AG04449 (cell line): ENCODE measurements at regions of chr5 and their contacts with region 1.

Region 1: GRCh38 chr5:59506285-59506877 is 387.1 kb downstream of the PDE4D start:
- DNase-seq: no peak
- H3K4me3 ChIP-seq: no peak overlapping the region
- CTCF ChIP-seq: no peak

Region 2: DNA sequence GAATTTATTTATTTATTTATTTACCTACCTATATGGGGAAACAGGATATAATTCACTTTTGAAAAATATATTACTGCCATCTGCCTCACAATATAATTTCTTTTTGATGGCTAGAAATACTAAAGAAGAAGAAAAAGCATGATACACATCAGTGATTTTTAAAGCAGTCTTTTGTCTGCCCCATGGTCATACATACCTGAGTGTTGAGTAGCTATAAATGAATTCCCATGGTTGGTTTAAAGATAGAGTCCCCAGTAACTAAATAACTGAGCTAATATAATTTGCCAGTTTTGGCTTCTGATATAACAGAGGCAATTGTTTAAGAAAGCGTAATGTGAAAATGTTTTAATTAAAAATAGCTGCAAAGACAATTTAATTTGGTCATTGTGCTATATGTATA is 60.6 kb before region 1 on chr5:
- CTCF ChIA-PET with region 1: no interaction called
- POLR2A ChIA-PET with region 1: no interaction called
- DNase-seq: no peak
- H3K4me3 ChIP-seq: no peak overlapping the region
- CTCF ChIP-seq: no peak

Region 3: DNA sequence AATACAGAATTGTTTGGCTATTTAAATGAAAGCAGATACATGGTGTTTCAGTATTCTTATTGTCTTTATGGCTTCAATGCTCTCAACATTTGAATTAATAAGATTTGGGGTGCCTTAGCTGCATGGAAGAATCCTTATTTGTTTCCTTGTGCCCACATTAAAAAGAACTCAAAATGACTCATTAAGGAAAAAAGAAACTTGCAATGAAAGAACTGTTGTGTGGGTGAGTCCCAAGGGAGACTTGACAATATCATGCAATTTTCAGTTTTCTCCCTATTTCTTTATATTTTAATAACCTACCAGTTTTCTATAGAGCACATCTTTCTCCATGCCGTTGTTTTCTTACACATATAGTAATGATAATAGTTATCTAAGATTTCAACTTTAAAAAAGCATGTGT is 16.8 kb before region 1 on chr5:
- CTCF ChIA-PET with region 1: interaction called, 17 read pairs
- POLR2A ChIA-PET with region 1: no interaction called
- DNase-seq: no peak
- H3K4me3 ChIP-seq: no peak overlapping the region
- CTCF ChIP-seq: no peak

Region 4: GRCh38 chr5:59620535-59621212 is 114.3 kb after region 1 on chr5:
- CTCF ChIA-PET with region 1: no interaction called
- POLR2A ChIA-PET with region 1: no interaction called
- DNase-seq: peak; percentile 12
- H3K4me3 ChIP-seq: no peak overlapping the region
- CTCF ChIP-seq: no peak

Region 5: DNA sequence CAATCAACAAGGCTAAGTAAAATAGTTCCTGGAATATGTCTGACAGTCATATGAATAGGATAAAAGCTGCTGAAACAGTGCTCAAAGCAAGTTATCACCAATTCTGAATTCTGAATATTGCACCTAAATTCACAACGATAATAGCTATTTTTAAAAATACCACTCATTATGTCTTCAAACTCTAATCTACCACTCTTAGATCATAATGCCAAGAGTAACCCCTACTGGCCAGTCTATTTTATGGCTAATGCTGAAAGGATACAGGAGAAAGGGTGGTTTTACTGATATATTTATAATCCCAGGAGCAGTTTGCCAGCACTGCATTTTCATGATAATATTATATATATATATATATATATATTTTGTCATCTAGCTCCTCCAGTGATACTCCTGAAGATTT is 154.4 kb after region 1 on chr5:
- CTCF ChIA-PET with region 1: interaction called, 83 read pairs
- POLR2A ChIA-PET with region 1: no interaction called
- DNase-seq: no peak
- H3K4me3 ChIP-seq: no peak overlapping the region
- CTCF ChIP-seq: peak; percentile 34

Region 6: GRCh38 chr5:59724482-59725391 is 218.4 kb after region 1 on chr5:
- CTCF ChIA-PET with region 1: interaction called, 14 read pairs
- POLR2A ChIA-PET with region 1: no interaction called
- DNase-seq: no peak
- H3K4me3 ChIP-seq: no peak overlapping the region
- CTCF ChIP-seq: peak; percentile 47

Region 7: DNA sequence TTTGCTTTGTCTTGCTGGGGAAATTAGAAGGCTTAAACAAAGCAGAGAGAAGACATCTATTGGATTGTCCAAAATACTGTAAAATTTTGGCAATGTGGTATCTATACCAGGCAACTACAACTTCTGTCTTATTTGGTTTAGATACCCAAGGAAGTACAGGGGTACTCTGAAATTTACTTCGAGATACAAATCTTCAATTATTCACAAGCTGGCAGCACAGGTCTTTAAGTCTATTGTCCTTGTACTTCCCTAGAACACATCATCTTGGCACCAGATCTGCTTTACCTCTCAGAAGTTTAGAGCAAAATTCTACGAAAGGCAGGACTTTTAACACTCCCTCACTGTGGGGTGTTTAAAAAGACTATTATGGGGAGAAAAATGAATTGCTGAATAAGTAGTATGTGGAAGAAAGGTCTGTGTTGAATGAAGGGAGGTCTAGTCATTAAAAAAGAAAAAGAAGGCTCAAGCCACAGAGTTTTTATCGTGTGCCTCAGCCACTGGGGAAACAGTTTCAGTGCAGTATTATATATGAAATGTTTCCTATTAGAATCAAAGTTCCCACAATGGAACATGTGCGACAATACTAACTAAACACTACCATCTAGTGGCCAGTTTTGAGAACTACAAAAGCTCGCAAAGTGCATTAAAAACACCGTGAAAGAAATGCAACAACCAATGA is 293.4 kb after region 1 on chr5:
- CTCF ChIA-PET with region 1: interaction called, 85 read pairs
- POLR2A ChIA-PET with region 1: no interaction called
- DNase-seq: no peak
- H3K4me3 ChIP-seq: no peak overlapping the region
- CTCF ChIP-seq: peak; percentile 30